PC-3 (cell line): ENCODE measurements at regions of chr4 and their contacts with region 1.

Region 1: DNA sequence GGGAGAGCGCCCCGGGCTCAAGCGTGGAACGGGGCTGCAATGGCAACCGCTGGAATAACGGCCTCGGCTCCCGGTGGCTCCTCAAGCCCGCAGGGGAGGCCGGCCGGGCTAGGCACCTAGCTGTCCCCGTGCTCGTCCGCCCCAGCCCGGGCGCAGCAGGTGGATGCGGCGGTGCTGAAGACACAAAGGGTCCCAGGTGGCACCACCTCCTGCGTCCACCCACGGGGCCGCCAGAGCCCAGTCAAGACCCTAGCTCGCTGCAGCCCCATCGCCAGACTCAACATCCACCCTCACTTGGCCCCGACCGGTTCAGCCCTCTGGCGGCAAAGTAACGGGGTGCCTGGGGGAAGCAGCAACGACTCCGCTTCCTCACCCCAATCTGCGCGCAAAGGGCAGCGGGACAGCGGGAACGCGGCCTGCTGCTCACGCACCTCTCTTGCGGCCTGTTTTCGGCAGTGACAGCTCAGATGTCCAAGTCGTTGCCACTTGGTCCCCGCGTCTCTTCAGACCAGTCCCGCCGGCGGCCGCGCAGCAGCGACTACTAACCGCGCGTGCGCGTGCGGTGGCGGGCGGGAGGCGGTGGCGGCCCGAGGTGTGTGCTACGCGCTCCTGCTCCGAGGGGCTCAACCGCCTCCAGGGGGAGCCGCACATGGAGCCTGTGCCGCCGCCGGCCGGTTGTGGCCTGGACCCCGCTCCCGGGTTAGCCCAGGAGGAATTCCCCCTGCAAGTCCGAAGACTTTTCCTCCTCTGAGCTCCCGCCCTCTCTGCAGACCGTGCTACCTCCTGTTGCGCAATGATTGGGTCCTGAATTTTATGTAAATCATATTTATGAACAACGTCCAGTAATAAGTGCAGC is at the start of gene CLGN:
- DNase-seq: peak; percentile 66
- ATAC-seq: peak; percentile 76
- H3K4me3 ChIP-seq: peak within 1 kb of the TSS; percentile 93
- H3K27ac ChIP-seq: peak within 1 kb of the TSS; percentile 25; the same call in 1 of the 2 replicates
- H3K4me1 ChIP-seq: peaks cover 40% of the 10 kb centered on the region
- H3K27me3 ChIP-seq: no peaks in the 10 kb centered on the region
- CTCF ChIP-seq: peak; percentile 48; the same call in 1 of the 2 replicates
- total RNA-seq, gene CLGN: 7.9 and 9.6 TPM in 2 replicates

Region 2: DNA sequence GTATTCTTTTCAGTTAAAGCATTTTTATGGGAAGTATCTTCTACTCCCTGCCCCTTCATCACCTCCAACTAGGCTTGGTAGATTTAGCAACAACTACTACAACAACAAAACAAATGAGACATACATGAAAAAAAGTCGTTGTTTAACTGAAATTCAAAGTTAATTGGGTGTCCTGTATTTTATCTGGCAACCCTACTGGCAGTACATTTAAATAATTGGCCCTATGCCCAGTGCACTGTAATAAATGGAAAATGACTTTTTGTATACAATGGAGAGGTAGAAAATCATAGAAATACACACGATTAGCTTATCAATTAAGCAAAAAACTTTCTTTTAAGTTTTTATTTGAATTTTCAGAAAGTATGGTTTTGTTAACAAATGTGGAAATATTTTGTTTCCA is 21.5 kb after region 1 on chr4:
- CTCF ChIA-PET with region 1: no interaction called
- POLR2A ChIA-PET with region 1: no interaction called
- intact Hi-C with region 1: loop called (anchors 2 kb)
- DNase-seq: peak; percentile 51
- ATAC-seq: peak; percentile 22; the same call in 1 of the 2 replicates
- H3K4me3 ChIP-seq: 0 out of 2 replicates have a peak overlapping the region, but pooled peaks have one; percentile 12
- H3K27ac ChIP-seq: peak overlapping the region; percentile 11
- H3K4me1 ChIP-seq: peaks cover 20% of the 10 kb centered on the region
- H3K27me3 ChIP-seq: no peaks in the 10 kb centered on the region
- CTCF ChIP-seq: no peak

Region 3: GRCh38 chr4:140523857-140524742 is 96.8 kb after region 1 on chr4 and contains the start of gene ELMOD2:
- CTCF ChIA-PET with region 1: no interaction called
- POLR2A ChIA-PET with region 1: no interaction called
- intact Hi-C with region 1: loop called (anchors 1 kb)
- DNase-seq: peak; percentile 92
- ATAC-seq: peak; percentile 100
- H3K4me3 ChIP-seq: peak within 1 kb of the TSS; percentile 77
- H3K27ac ChIP-seq: peak within 1 kb of the TSS; percentile 37
- H3K4me1 ChIP-seq: peaks cover 7% of the 10 kb centered on the region; the same call in 1 of the 2 replicates
- H3K27me3 ChIP-seq: no peaks in the 10 kb centered on the region
- CTCF ChIP-seq: peak; percentile 77
- total RNA-seq, gene ELMOD2: 10.1 and 12.1 TPM in 2 replicates